ENCODE measurements at regions of chr10 and their contacts with region 1.

Region 1: DNA sequence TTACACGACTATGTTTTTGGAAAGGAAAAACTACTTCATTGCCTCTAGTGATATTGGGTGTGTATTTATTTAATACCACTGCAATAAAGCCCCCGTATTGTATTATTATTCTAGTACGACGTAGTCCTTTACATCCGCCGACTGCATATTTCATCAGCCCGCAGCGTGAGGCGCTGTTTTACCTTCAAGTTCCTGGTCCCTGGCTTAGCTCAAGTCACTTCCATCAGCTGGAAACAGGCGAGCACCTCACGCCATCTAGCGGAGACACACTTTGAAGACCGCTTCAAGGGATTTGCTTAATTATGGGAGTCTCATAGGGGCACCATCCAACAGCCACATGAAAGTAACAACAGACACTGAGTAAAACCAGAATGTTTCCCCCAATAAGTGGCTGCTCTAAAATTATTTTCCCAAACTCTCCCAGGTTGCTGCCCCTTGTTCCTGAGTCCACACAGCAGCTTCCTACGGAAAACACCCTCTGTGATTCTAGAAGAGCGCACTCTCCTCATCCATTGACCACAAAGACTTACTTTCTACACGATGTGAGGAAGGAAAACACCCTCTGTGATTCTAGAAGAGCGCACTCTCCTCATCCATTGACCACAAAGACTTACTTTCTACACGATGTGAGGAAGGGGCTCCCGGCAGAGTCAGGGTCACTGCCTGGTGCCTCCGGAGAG is 15.7 kb upstream of the ITIH2 start:
- DNase-seq: peak; percentile 62
- ATAC-seq: peak; percentile 92
- H3K4me3 ChIP-seq: no peak overlapping the region
- H3K27ac ChIP-seq: no peak overlapping the region
- H3K4me1 ChIP-seq: no peaks in the 10 kb centered on the region
- H3K27me3 ChIP-seq: no peaks in the 10 kb centered on the region
- CTCF ChIP-seq: peak; percentile 86 to 95 (median 89)
- EP300 ChIP-seq: no peak
- POLR2A ChIP-seq: no peak
- RAD21 ChIP-seq: peak; percentile 89

Region 2: GRCh38 chr10:7121154-7121810 is 566.1 kb before region 1 on chr10:
- CTCF ChIA-PET with region 1: interaction called, 5 read pairs
- POLR2A ChIA-PET with region 1: no interaction called
- RAD21 ChIA-PET with region 1: interaction called, 3 read pairs
- SMC1A ChIA-PET with region 1: no interaction called
- in situ Hi-C with region 1: no loop called
- intact Hi-C with region 1: loop called (anchors 5 kb)
- DNase-seq: no peak
- ATAC-seq: peak; percentile 91
- H3K4me3 ChIP-seq: no peak overlapping the region
- H3K27ac ChIP-seq: no peak overlapping the region
- H3K4me1 ChIP-seq: no peaks in the 10 kb centered on the region
- H3K27me3 ChIP-seq: no peaks in the 10 kb centered on the region; a peak in 1 of 4 replicates
- CTCF ChIP-seq: peak; percentile 81 to 82 (median 82)
- EP300 ChIP-seq: no peak
- POLR2A ChIP-seq: no peak
- RAD21 ChIP-seq: peak; percentile 84

Region 3: GRCh38 chr10:7417103-7417623 is 270.2 kb before region 1 on chr10:
- CTCF ChIA-PET with region 1: interaction called, 6 read pairs
- POLR2A ChIA-PET with region 1: no interaction called
- RAD21 ChIA-PET with region 1: interaction called, 3 read pairs
- SMC1A ChIA-PET with region 1: no interaction called
- in situ Hi-C with region 1: no loop called
- intact Hi-C with region 1: loop called (anchors 2 kb)
- DNase-seq: no peak
- ATAC-seq: peak; percentile 40
- H3K4me3 ChIP-seq: no peak overlapping the region
- H3K27ac ChIP-seq: no peak overlapping the region
- H3K4me1 ChIP-seq: peaks cover 13% of the 10 kb centered on the region
- H3K27me3 ChIP-seq: no peaks in the 10 kb centered on the region
- CTCF ChIP-seq: peak; percentile 25 to 61 (median 53); a peak in 4 of 6 replicates
- EP300 ChIP-seq: no peak
- POLR2A ChIP-seq: no peak
- RAD21 ChIP-seq: peak; percentile 67

Region 4: GRCh38 chr10:7533657-7534479 is 153.5 kb before region 1 on chr10:
- CTCF ChIA-PET with region 1: interaction called, 31 read pairs
- POLR2A ChIA-PET with region 1: no interaction called
- RAD21 ChIA-PET with region 1: interaction called, 18 read pairs
- SMC1A ChIA-PET with region 1: interaction called, 28 read pairs
- in situ Hi-C with region 1: no loop called
- intact Hi-C with region 1: loop called (anchors 1 kb)
- DNase-seq: no peak
- ATAC-seq: peak; percentile 67
- H3K4me3 ChIP-seq: no peak overlapping the region
- H3K27ac ChIP-seq: no peak overlapping the region
- H3K4me1 ChIP-seq: peaks cover 5% of the 10 kb centered on the region; the same call in 1 of the 2 replicates
- H3K27me3 ChIP-seq: no peaks in the 10 kb centered on the region
- CTCF ChIP-seq: no peak
- EP300 ChIP-seq: no peak
- POLR2A ChIP-seq: no peak
- RAD21 ChIP-seq: no peak

Region 5: GRCh38 chr10:7671121-7671520 is 16.2 kb before region 1 on chr10:
- CTCF ChIA-PET with region 1: interaction called, 24 read pairs
- POLR2A ChIA-PET with region 1: interaction called, 4 read pairs
- RAD21 ChIA-PET with region 1: no interaction called
- SMC1A ChIA-PET with region 1: interaction called, 12 read pairs
- in situ Hi-C with region 1: no loop called
- intact Hi-C with region 1: no loop called
- DNase-seq: no peak
- ATAC-seq: no peak
- H3K4me3 ChIP-seq: no peak overlapping the region
- H3K27ac ChIP-seq: no peak overlapping the region
- H3K4me1 ChIP-seq: no peaks in the 10 kb centered on the region
- H3K27me3 ChIP-seq: peaks cover 0 to 4% of the 10 kb centered on the region in 2 experiments; a peak in 3 of 4 replicates
- CTCF ChIP-seq: no peak
- EP300 ChIP-seq: no peak
- POLR2A ChIP-seq: no peak
- RAD21 ChIP-seq: no peak

Region 6: DNA sequence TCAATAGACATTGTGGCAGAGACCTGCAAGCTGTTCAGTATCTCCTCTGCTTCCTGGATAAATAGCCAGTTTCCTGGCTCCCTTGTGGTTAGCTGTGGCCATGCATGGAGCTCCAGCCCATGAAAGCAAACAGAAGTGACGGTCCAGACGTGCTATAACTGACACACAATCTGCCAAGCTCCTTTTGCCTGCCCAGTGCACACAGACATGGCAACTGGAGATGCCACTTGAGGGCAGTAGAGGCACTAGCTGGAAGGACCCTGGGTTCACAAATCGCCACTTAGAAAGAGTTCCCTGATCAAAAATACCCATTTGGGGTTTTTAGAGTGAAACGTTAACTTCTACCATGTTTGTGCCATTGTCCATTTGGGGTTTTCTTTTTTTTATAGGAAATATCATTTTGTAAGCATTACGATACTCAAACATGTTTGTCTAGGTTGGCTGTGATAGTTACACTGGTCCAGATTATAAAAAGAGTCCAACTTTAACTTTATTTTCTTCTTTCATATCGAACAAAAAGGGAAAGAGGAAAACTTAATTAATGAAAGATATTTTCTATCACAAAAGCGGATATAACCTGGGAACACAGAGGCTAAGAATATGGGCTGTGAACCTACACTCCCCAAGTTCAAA is 69.1 kb after region 1 on chr10:
- CTCF ChIA-PET with region 1: interaction called, 10 read pairs
- POLR2A ChIA-PET with region 1: no interaction called
- RAD21 ChIA-PET with region 1: interaction called, 5 read pairs
- SMC1A ChIA-PET with region 1: interaction called, 5 read pairs
- in situ Hi-C with region 1: no loop called
- intact Hi-C with region 1: no loop called
- DNase-seq: no peak
- ATAC-seq: peak; percentile 83
- H3K4me3 ChIP-seq: no peak overlapping the region
- H3K27ac ChIP-seq: no peak overlapping the region
- H3K4me1 ChIP-seq: no peaks in the 10 kb centered on the region
- H3K27me3 ChIP-seq: no peaks in the 10 kb centered on the region
- CTCF ChIP-seq: peak; percentile 50 to 61 (median 53)
- EP300 ChIP-seq: no peak
- POLR2A ChIP-seq: no peak
- RAD21 ChIP-seq: peak; percentile 34

Region 7: GRCh38 chr10:8254350-8254749 is 567.0 kb after region 1 on chr10:
- CTCF ChIA-PET with region 1: no interaction called
- POLR2A ChIA-PET with region 1: no interaction called
- RAD21 ChIA-PET with region 1: no interaction called
- SMC1A ChIA-PET with region 1: no interaction called
- in situ Hi-C with region 1: no loop called
- intact Hi-C with region 1: no loop called
- DNase-seq: no peak
- ATAC-seq: no peak
- H3K4me3 ChIP-seq: no peak overlapping the region
- H3K27ac ChIP-seq: no peak overlapping the region
- H3K4me1 ChIP-seq: no peaks in the 10 kb centered on the region
- H3K27me3 ChIP-seq: no peaks in the 10 kb centered on the region
- CTCF ChIP-seq: no peak
- EP300 ChIP-seq: no peak
- POLR2A ChIP-seq: no peak
- RAD21 ChIP-seq: no peak